ENCODE measurements at regions of chr1 and their contacts with region 1.

Region 1: DNA sequence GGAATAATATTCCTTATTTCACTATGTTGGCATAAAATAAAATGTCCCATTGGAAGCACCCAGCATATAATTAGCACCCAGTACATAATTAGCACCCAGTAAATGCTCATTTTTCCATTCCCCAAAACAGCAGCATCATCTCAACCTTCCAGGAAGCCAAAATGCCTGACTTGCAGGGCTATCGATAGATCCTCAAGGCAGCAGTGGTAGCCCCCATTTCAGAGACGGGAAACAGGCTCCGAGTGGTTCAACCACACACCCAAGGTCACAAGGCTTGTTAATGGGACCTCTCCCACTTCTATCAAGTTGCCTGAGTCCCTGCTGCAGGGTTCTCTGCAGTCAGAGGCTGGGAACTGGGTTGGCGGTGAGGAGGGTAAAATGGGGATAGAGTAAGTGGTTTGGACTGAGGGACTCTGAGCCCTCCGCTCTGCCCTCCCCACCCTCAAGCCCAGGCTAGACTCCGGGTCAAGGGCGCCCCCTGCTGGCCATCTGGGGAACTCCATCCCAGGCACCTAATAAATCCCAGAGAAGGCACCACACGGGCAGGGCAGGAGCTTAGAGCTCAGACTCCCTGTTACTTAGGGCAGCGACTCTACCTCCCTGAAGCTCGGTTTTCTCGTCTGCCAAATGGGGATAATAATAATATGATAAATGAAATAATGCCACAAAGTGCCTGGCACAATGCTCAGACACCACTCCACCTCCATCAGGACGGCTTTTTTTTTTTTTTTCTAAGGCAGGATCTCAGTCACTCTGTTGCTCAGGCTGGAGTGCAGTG is 21.9 kb upstream of the LAPTM5 start:
- DNase-seq: peak; percentile 69 to 84
- H3K4me3 ChIP-seq: no peak overlapping the region
- H3K4me3 Mint-ChIP-seq: no peak overlapping the region
- H3K27ac Mint-ChIP-seq: no peak overlapping the region
- H3K4me1 ChIP-seq: peaks cover 9% of the 10 kb centered on the region; the same call in 1 of the 2 replicates
- H3K4me1 Mint-ChIP-seq: no peaks in the 10 kb centered on the region
- H3K27me3 ChIP-seq: no peaks in the 10 kb centered on the region
- H3K27me3 Mint-ChIP-seq: peaks cover 3% of the 10 kb centered on the region
- CTCF ChIP-seq: peak; percentile 73 to 81

Region 2: GRCh38 chr1:30718636-30719405 is 60.7 kb before region 1 on chr1:
- CTCF ChIA-PET with region 1: interaction called, 96 read pairs
- POLR2A ChIA-PET with region 1: interaction called, 5 read pairs
- intact Hi-C with region 1: loop called (anchors 1 kb)
- DNase-seq: peak in 1 of 2 experiments; percentile 90
- H3K4me3 ChIP-seq: peak overlapping the region; percentile 75
- H3K4me3 Mint-ChIP-seq: peak overlapping the region; percentile 79
- H3K27ac Mint-ChIP-seq: peak overlapping the region; percentile 87
- H3K4me1 ChIP-seq: no peaks in the 10 kb centered on the region
- H3K4me1 Mint-ChIP-seq: no peaks in the 10 kb centered on the region
- H3K27me3 ChIP-seq: no peaks in the 10 kb centered on the region
- H3K27me3 Mint-ChIP-seq: no peaks in the 10 kb centered on the region
- CTCF ChIP-seq: peak; percentile 68 to 80

Measured in Caco-2 (cell line).